Activated naive CD4-positive, alpha-beta T cell treated with anti-CD3 and anti-CD28 coated beads for 36 hours (primary cell): ENCODE measurements at regions of chr22 and their contacts with region 1.

Region 1: DNA sequence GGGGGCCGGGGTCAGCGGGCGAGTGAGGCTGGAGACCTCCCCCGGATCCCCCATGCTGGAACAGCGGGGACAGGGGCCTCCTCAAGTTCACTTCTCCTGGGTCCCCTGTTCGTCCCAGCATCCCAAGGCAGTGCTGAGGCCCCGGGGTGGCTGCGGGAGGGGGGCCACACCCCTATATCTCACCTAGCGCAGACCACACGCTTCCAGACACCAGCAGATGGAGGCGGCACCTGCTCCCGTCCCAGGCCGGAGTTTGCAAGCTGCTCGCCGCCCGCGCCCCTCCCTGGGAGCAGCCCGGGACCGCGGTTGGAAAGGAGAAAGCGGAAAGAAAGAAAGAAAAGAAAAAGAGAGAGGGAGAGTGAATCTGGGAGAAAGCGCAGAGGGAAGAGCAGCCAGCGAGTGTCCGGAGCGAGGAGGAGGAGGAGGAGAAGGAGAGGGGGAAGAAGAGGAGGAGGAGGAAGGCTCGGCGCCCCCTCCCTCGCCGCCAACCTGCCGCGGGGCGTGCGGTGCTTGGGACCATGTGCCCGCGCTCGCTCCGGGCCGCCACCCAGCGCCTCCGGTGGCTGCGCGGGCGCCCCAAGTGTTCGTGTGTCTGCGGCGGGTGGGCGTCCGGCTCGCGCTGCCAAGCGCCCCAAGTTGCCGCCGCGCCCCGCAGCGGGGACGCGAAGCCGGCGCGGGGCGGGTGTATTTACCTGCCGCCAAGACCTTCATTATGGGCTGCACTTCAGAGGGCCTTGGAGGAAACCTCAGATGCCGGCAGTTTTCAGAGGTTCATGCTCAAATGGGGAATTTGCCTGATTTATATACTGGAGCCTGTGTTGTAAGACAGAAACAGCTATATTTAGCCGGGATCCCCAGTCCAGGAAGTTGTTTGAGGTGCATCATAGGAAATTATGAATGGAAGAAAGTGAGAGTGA is at the start of gene LIF:
- DNase-seq: peak; percentile 75
- H3K4me3 Mint-ChIP-seq: peak within 1 kb of the TSS; percentile 98
- H3K27ac Mint-ChIP-seq: peak within 1 kb of the TSS; percentile 99
- H3K4me1 Mint-ChIP-seq: peaks cover 70% of the 10 kb centered on the region
- H3K27me3 Mint-ChIP-seq: no peaks in the 10 kb centered on the region
- total RNA-seq, gene LIF: 111 to 115 TPM

Region 2: GRCh38 chr22:30169002-30169401 is 77.2 kb before region 1 on chr22:
- CTCF ChIA-PET with region 1: no interaction called
- intact Hi-C with region 1: loop called (anchors 1 kb)
- DNase-seq: no peak
- H3K4me3 Mint-ChIP-seq: no peak overlapping the region
- H3K27ac Mint-ChIP-seq: no peak overlapping the region
- H3K4me1 Mint-ChIP-seq: peaks cover 7% of the 10 kb centered on the region
- H3K27me3 Mint-ChIP-seq: no peaks in the 10 kb centered on the region

Region 3: GRCh38 chr22:30178181-30179126 is 67.8 kb before region 1 on chr22:
- CTCF ChIA-PET with region 1: interaction called, 4 read pairs
- intact Hi-C with region 1: loop called (anchors 1 kb)
- DNase-seq: peak; percentile 87
- H3K4me3 Mint-ChIP-seq: peak overlapping the region; percentile 23
- H3K27ac Mint-ChIP-seq: peak overlapping the region; percentile 99
- H3K4me1 Mint-ChIP-seq: peaks cover 74% of the 10 kb centered on the region
- H3K27me3 Mint-ChIP-seq: no peaks in the 10 kb centered on the region

Region 4: GRCh38 chr22:30196141-30196879 is 49.9 kb before region 1 on chr22:
- CTCF ChIA-PET with region 1: no interaction called
- intact Hi-C with region 1: loop called (anchors 1 kb)
- DNase-seq: peak; percentile 84
- H3K4me3 Mint-ChIP-seq: peak overlapping the region; percentile 57
- H3K27ac Mint-ChIP-seq: peak overlapping the region; percentile 95
- H3K4me1 Mint-ChIP-seq: peaks cover 70% of the 10 kb centered on the region
- H3K27me3 Mint-ChIP-seq: no peaks in the 10 kb centered on the region

Region 5: DNA sequence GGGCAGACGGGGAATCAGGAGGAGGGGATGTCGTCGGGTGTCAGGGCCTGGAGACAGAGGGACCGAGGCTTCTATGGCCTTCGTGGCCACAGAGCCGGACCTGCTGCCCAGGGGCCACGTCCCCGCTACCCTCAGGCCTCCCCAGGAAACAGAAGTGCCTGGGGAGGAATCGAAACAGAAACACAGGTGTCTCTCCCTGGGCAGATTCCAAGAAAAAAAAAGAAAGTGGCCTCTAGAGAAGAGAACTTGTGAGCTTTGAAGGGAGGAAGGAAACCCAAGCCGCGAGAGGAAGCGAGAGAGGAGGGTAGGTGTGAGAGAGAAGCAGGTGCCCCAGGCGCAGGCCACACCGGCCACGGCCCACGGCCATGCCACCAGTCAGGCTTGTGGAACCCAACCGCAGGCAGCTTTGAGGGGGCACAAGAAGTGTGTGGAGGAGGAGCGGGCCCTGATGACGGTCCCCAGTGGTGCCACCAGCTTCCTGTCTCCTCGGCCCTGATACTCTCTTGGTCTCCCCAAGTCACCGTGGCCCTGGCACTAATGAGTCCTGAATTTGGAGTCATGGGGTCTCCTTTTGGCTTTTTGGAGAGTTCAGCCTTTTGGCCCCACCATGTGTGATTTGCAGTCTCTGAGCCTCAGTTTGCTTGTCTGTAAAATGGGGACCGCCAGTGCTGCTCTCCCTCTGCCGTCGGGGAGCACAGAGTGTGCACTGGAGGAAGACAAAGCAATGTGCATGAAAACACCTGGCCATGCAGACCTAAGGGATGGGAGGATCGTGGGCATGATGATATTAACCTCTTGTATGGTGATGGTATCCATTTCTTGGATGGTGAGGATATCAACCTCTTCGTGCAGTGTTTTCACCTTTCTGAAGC is 24.9 kb before region 1 on chr22:
- CTCF ChIA-PET with region 1: interaction called, 3 read pairs
- intact Hi-C with region 1: loop called (anchors 1 kb)
- DNase-seq: peak; percentile 70
- H3K4me3 Mint-ChIP-seq: peak overlapping the region; percentile 9
- H3K27ac Mint-ChIP-seq: peak overlapping the region; percentile 57
- H3K4me1 Mint-ChIP-seq: peaks cover 48% of the 10 kb centered on the region
- H3K27me3 Mint-ChIP-seq: no peaks in the 10 kb centered on the region

Region 6: GRCh38 chr22:30262917-30263741 is 16.9 kb after region 1 on chr22:
- CTCF ChIA-PET with region 1: interaction called, 6 read pairs
- intact Hi-C with region 1: loop called (anchors 1 kb)
- DNase-seq: peak; percentile 87
- H3K4me3 Mint-ChIP-seq: peak overlapping the region; percentile 65
- H3K27ac Mint-ChIP-seq: peak overlapping the region; percentile 43
- H3K4me1 Mint-ChIP-seq: peaks cover 39% of the 10 kb centered on the region
- H3K27me3 Mint-ChIP-seq: no peaks in the 10 kb centered on the region

Region 7: GRCh38 chr22:30606455-30607299 is 360.4 kb after region 1 on chr22 and contains the start of gene TCN2:
- CTCF ChIA-PET with region 1: no interaction called
- intact Hi-C with region 1: no loop called
- DNase-seq: peak; percentile 78
- H3K4me3 Mint-ChIP-seq: peak within 1 kb of the TSS; percentile 74
- H3K27ac Mint-ChIP-seq: no peak within 1 kb of the TSS
- H3K4me1 Mint-ChIP-seq: peaks cover 33% of the 10 kb centered on the region
- H3K27me3 Mint-ChIP-seq: no peaks in the 10 kb centered on the region
- total RNA-seq, gene TCN2: 0.19 to 0.22 TPM